OCI-LY7 (cell line): ENCODE measurements at regions of chr6 and their contacts with region 1.

Region 1: GRCh38 chr6:148972481-148972880 is 225.7 kb downstream of the UST start:
- DNase-seq: peak; percentile 90
- H3K4me3 ChIP-seq: no peak overlapping the region
- H3K27ac ChIP-seq: no peak overlapping the region
- H3K4me1 ChIP-seq: peaks cover 25% of the 10 kb centered on the region
- CTCF ChIP-seq: no peak

Region 2: DNA sequence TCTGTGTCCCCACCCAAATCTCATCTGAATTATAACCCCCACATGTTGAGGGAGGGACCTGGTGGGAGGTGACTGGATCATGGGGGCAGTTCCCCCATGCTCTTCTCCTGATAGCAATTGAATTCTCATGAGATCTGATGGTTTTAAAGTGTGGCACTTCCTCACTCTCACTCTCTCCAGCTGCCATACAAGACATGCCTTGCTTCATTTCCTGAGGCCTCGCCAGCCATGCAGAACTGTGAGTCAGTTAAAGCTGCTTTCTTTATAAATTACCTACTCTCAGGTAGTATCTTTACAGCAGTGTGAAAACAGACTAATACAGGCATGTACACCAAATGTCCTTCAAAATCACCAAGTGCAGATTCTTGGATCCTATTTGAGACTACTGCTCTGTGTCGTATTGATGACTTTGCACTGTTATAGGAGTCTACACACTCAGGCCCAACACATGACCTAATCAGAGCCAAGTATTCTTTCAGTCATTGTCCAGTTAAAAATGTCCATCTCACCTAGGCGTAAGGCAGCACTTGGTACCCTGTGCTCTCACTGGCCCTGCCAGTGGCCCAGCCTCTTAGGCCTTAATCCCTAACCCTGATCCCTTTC is 278.5 kb before region 1 on chr6:
- CTCF ChIA-PET with region 1: no interaction called
- POLR2A ChIA-PET with region 1: no interaction called
- intact Hi-C with region 1: no loop called
- DNase-seq: peak; percentile 76
- H3K4me3 ChIP-seq: peak overlapping the region; percentile 25
- H3K27ac ChIP-seq: peak overlapping the region; percentile 61
- H3K4me1 ChIP-seq: peaks cover 16% of the 10 kb centered on the region
- CTCF ChIP-seq: no peak

Region 3: GRCh38 chr6:148746363-148747144 is 225.9 kb before region 1 on chr6 and contains the start of gene UST:
- CTCF ChIA-PET with region 1: no interaction called
- POLR2A ChIA-PET with region 1: no interaction called
- intact Hi-C with region 1: loop called (anchors 1 kb)
- DNase-seq: peak; percentile 83
- H3K4me3 ChIP-seq: peak within 1 kb of the TSS; percentile 84
- H3K27ac ChIP-seq: no peak within 1 kb of the TSS
- H3K4me1 ChIP-seq: peaks cover 14% of the 10 kb centered on the region
- CTCF ChIP-seq: peak; percentile 88
- total RNA-seq, gene UST: 0.59 and 1.4 TPM in 2 replicates

Region 4: DNA sequence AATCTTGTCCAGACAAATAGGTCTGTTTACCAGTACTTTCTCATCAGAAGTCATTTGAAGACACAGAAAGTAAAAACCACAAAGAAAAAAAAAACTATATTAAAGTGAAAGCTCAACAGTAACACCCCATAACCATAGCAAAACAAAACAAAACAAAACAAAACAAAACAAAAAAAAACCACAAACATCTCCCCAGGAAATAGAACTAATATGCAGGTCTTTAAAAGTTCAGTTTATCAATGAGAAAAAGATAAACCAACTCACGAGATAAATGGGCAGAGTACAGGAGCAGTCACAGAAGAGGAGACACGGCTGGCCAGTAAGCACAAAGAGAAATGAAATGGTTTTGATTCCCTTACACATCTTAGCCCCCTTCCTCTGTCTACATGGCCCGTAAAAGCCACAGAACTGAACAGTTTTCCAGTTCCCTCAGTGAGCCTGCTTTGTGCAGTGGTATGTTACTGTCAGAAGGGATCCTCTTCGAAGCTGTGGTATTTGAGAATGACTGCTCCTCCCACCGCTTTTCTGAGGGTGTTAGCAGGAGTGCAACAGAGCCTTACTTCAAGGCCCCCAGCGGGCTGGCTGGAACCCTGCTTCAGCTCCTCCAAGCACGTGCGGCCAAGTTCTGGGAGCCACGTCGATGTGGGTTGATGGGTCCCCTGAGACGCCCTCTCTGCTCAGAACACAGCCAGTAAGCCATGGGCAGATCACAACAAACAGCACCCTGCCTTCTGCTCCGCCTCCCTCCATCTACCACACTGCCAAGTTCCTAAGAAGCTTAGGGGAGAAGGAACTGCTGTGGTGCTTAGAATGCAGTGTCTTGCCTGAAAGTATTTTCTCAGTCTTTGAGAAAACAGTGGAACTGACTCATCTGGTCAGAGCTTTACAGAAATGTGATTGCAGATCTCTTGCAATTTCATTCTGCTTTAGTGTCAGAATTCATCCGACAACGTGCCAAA is 211.6 kb before region 1 on chr6:
- CTCF ChIA-PET with region 1: no interaction called
- POLR2A ChIA-PET with region 1: interaction called, 4 read pairs
- intact Hi-C with region 1: loop called (anchors 1 kb)
- DNase-seq: peak; percentile 84
- H3K4me3 ChIP-seq: peak overlapping the region; percentile 56
- H3K27ac ChIP-seq: peak overlapping the region; percentile 94
- H3K4me1 ChIP-seq: peaks cover 62% of the 10 kb centered on the region
- CTCF ChIP-seq: peak; percentile 18; the same call in 1 of the 2 replicates

Region 5: DNA sequence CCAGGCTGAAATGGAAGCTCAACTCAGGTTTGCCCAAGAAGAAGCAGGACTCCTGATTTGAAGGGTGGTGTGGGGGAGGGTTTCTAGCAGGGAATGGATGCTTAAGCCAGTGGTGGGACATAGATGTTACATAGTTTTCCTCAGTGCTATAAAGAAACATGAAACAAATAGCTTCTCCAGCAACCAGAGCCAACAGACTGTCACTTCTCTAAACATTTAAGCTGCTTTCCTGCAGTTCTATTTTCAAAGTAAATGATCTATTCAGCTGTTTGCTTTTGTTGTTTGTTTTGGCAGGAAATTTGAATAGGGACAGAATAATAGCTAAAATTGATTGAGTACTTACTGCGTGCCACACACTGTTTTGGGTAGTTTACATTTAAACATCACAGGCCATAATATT is 56.7 kb before region 1 on chr6:
- CTCF ChIA-PET with region 1: no interaction called
- POLR2A ChIA-PET with region 1: no interaction called
- intact Hi-C with region 1: loop called (anchors 2 kb)
- DNase-seq: no peak
- H3K4me3 ChIP-seq: no peak overlapping the region
- H3K27ac ChIP-seq: no peak overlapping the region
- H3K4me1 ChIP-seq: no peaks in the 10 kb centered on the region
- CTCF ChIP-seq: no peak

Region 6: DNA sequence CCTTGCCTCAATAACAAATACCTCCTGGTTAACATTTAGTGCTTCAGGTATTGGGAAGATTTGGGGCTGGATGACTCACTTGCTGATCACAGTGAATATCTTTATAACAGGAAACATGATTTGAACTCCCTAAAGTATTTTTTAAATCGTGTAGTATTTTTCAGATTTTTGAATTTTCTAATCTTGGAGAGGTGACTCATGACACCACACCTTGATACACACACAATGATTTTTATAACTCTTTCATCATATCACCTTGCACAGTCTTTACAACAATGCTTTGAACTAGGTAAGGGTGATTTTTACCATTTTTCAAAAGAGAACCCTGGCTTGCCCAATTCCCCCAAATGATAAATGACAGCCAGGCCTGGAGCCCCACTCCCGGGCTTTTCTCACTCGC is 47.8 kb after region 1 on chr6:
- CTCF ChIA-PET with region 1: no interaction called
- POLR2A ChIA-PET with region 1: no interaction called
- intact Hi-C with region 1: no loop called
- DNase-seq: no peak
- H3K4me3 ChIP-seq: no peak overlapping the region
- H3K27ac ChIP-seq: no peak overlapping the region
- H3K4me1 ChIP-seq: no peaks in the 10 kb centered on the region
- CTCF ChIP-seq: no peak